GM12878 (cell line): ENCODE measurements at regions of chr9 and their contacts with region 1.

Region 1: GRCh38 chr9:3299872-3300271 is 225.9 kb downstream of the RFX3 start:
- DNase-seq: peak; percentile 71
- ATAC-seq: peak; percentile 99
- H3K4me3 ChIP-seq: no peak overlapping the region
- H3K27ac ChIP-seq: no peak overlapping the region; the same call in 1 of the 2 replicates
- H3K4me1 ChIP-seq: peaks cover 8% of the 10 kb centered on the region; the same call in 1 of the 2 replicates
- H3K27me3 ChIP-seq: no peaks in the 10 kb centered on the region
- CTCF ChIP-seq: no peak
- EP300 ChIP-seq: peak; percentile 40 to 72; a peak in 3 of 4 replicates
- POLR2A ChIP-seq: no peak
- RAD21 ChIP-seq: no peak

Region 2: GRCh38 chr9:3281399-3281798 is 18.5 kb before region 1 on chr9:
- CTCF ChIA-PET with region 1: interaction called, 3 read pairs
- POLR2A ChIA-PET with region 1: no interaction called
- RAD21 ChIA-PET with region 1: no interaction called
- SMC1A ChIA-PET with region 1: interaction called, 10 read pairs
- in situ Hi-C with region 1: no loop called
- intact Hi-C with region 1: no loop called
- DNase-seq: no peak
- ATAC-seq: peak; percentile 87
- H3K4me3 ChIP-seq: no peak overlapping the region
- H3K27ac ChIP-seq: no peak overlapping the region
- H3K4me1 ChIP-seq: peaks cover 4% of the 10 kb centered on the region; the same call in 1 of the 2 replicates
- H3K27me3 ChIP-seq: no peaks in the 10 kb centered on the region
- CTCF ChIP-seq: no peak
- EP300 ChIP-seq: no peak
- POLR2A ChIP-seq: no peak
- RAD21 ChIP-seq: no peak

Region 3: GRCh38 chr9:3367185-3367584 is 67.3 kb after region 1 on chr9:
- CTCF ChIA-PET with region 1: no interaction called
- POLR2A ChIA-PET with region 1: no interaction called
- RAD21 ChIA-PET with region 1: no interaction called
- SMC1A ChIA-PET with region 1: interaction called, 4 read pairs
- in situ Hi-C with region 1: no loop called
- intact Hi-C with region 1: loop called (anchors 10 kb)
- DNase-seq: no peak
- ATAC-seq: no peak
- H3K4me3 ChIP-seq: no peak overlapping the region
- H3K27ac ChIP-seq: no peak overlapping the region
- H3K4me1 ChIP-seq: no peaks in the 10 kb centered on the region
- H3K27me3 ChIP-seq: no peaks in the 10 kb centered on the region
- CTCF ChIP-seq: no peak
- EP300 ChIP-seq: no peak
- POLR2A ChIP-seq: no peak
- RAD21 ChIP-seq: no peak

Region 4: DNA sequence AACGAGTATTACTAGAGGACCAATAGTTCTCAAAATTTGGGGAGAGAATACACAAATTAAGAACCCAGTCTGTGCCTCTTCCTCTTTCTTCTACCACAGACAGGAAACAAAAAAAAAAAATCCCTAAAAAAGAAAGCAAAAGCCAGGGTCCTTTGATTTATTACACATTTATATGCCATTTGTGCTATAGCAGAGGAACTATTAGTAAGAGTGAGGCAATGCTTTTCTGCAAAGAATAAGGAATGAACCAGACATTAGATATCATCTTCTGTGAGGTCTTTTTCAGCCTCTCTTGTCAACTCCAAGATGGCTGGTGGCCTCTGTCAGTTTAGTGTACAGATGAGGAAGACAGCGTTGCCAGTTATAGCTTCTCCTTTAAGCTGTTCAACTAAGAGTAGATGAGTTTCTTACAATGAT is 98.4 kb after region 1 on chr9:
- CTCF ChIA-PET with region 1: no interaction called
- POLR2A ChIA-PET with region 1: no interaction called
- RAD21 ChIA-PET with region 1: no interaction called
- SMC1A ChIA-PET with region 1: no interaction called
- in situ Hi-C with region 1: no loop called
- intact Hi-C with region 1: loop called (anchors 2 kb)
- DNase-seq: no peak
- ATAC-seq: peak; percentile 78
- H3K4me3 ChIP-seq: peak overlapping the region; percentile 23; the same call in 1 of the 2 replicates
- H3K27ac ChIP-seq: peak overlapping the region; percentile 74
- H3K4me1 ChIP-seq: peaks cover 3% of the 10 kb centered on the region; the same call in 1 of the 2 replicates
- H3K27me3 ChIP-seq: no peaks in the 10 kb centered on the region
- CTCF ChIP-seq: no peak
- EP300 ChIP-seq: no peak
- POLR2A ChIP-seq: no peak
- RAD21 ChIP-seq: no peak